ENCODE measurements at regions of chr1 and their contacts with region 1.

Region 1: GRCh38 chr1:47437447-47438164 is at the start of gene FOXD2:
- DNase-seq: peak; percentile 95
- ATAC-seq: peak; percentile 95
- H3K4me3 ChIP-seq: peak within 1 kb of the TSS; percentile 71
- H3K27ac ChIP-seq: peak within 1 kb of the TSS; percentile 83
- H3K4me1 ChIP-seq: peaks cover 32% of the 10 kb centered on the region
- H3K27me3 ChIP-seq: peaks cover 69% of the 10 kb centered on the region
- CTCF ChIP-seq: peak; percentile 98
- total RNA-seq, gene FOXD2: 0.35 TPM

Region 2: DNA sequence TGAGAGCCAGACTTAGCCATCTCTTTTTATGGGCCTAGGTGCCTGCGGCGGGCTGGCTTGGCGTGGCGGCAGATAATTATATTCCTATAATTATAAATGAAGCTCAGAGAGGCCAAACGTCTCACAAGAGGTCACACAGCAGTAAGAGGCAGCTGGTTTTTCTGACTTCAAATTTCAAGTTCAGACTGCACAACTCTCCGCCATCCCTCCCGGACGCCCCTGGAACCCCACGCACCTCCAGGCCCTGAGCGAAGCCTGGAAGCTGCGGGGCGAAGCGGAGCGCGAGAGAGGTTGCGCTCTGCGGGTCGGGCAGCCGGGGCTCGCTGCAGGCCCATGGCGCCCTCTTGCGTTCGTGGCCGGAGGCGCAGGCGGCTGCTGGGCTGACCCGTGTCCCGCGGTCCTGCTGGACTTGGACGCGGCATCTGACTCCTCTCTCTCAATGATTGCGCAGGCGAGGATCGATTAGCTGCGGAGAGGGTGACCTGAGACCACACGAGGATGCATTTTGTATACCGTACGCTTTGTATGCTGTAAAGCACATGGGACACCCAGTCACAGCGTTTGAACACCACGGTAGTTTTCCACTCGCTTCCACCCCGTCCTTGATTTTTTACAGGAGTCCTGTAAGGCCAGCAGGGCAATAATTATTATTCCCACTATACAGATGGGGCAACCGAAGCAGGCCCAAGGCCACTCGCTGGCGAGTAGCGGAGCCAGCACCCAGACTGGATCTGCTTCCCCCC is 272.9 kb after region 1 on chr1:
- intact Hi-C with region 1: loop called (anchors 5 kb)
- DNase-seq: peak; percentile 88
- ATAC-seq: peak; percentile 93
- H3K4me3 ChIP-seq: no peak overlapping the region
- H3K27ac ChIP-seq: no peak overlapping the region
- H3K4me1 ChIP-seq: peaks cover 22% of the 10 kb centered on the region
- H3K27me3 ChIP-seq: peaks cover 85% of the 10 kb centered on the region
- CTCF ChIP-seq: peak; percentile 99

Measured in upper lobe of right lung (tissue), 1 donor.